CD4-positive, alpha-beta T cell (primary cell): ENCODE measurements at regions of chr5 and their contacts with region 1.

Region 1: GRCh38 chr5:122845229-122846050 is at the start of gene SNX24:
- DNase-seq: peak; percentile 45 to 88 (median 62)
- ATAC-seq: peak; percentile 87
- H3K4me3 ChIP-seq: peak within 1 kb of the TSS; percentile 82
- H3K4me3 Mint-ChIP-seq: peak within 1 kb of the TSS; percentile 92
- H3K27ac ChIP-seq: peak within 1 kb of the TSS; percentile 62 to 64
- H3K27ac Mint-ChIP-seq: peak within 1 kb of the TSS; percentile 82
- H3K4me1 ChIP-seq: peaks cover 20% of the 10 kb centered on the region
- H3K4me1 Mint-ChIP-seq: peaks cover 38% of the 10 kb centered on the region
- H3K27me3 ChIP-seq: no peaks in the 10 kb centered on the region
- H3K27me3 Mint-ChIP-seq: peaks cover 3% of the 10 kb centered on the region
- CTCF ChIP-seq: no peak
- total RNA-seq, gene SNX24: 2.3 to 3.0 TPM

Region 2: GRCh38 chr5:121962347-121962670 is 883.1 kb before region 1 on chr5:
- CTCF ChIA-PET with region 1: no interaction called
- POLR2A ChIA-PET with region 1: interaction called, 3 read pairs
- intact Hi-C with region 1: loop called in 1 of 2 experiments (anchors 5 kb)
- DNase-seq: peak in 1 of 14 experiments; percentile 27
- ATAC-seq: peak; percentile 8
- H3K4me3 ChIP-seq: peak overlapping the region; percentile 78
- H3K4me3 Mint-ChIP-seq: peak overlapping the region; percentile 97
- H3K27ac ChIP-seq: peak overlapping the region; percentile 48 to 54
- H3K27ac Mint-ChIP-seq: peak overlapping the region; percentile 91
- H3K4me1 ChIP-seq: peaks cover 13% of the 10 kb centered on the region
- H3K4me1 Mint-ChIP-seq: peaks cover 47% of the 10 kb centered on the region
- H3K27me3 ChIP-seq: peaks cover 0 to 2% of the 10 kb centered on the region in 2 experiments
- H3K27me3 Mint-ChIP-seq: peaks cover 27% of the 10 kb centered on the region
- CTCF ChIP-seq: no peak

Region 3: DNA sequence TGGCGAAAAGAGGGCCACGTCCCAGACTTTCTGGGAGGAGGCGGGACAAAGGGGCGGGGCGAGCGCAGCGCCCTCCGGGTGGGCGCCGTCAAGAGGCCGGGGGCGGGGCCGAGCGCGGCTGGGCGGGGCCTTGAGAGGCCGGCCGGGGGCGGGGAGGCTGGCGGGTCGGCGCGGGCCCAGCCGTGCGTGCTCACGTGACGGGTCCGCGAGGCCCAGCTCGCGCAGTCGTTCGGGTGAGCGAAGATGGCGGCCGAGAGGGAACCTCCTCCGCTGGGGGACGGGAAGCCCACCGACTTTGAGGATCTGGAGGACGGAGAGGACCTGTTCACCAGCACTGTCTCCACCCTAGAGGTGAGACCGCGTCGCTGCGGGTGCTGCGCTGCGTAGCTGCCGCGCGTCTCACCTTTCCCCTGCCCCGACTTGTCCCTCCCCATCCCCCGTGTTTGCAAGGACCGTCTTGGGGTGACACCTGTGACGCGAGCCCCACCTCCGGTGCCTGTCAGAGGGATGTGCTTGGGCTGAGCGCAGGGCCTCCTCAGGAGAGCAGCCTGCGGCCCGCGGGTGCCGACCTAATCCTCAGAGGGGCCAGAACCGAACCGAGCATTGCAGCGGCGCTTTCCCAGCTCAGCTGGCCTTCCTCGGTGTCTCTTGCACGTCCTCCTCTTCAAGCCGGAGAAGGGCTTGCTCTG is 70.4 kb before region 1 on chr5 and contains the start of gene SNX2:
- CTCF ChIA-PET with region 1: no interaction called
- POLR2A ChIA-PET with region 1: interaction called, 31 read pairs
- intact Hi-C with region 1: loop called (anchors 2 to 10 kb)
- DNase-seq: peak; percentile 73 to 94 (median 84)
- ATAC-seq: peak; percentile 84
- H3K4me3 ChIP-seq: peak within 1 kb of the TSS; percentile 93
- H3K4me3 Mint-ChIP-seq: peak within 1 kb of the TSS; percentile 96
- H3K27ac ChIP-seq: peak within 1 kb of the TSS; percentile 78 to 84
- H3K27ac Mint-ChIP-seq: peak within 1 kb of the TSS; percentile 95
- H3K4me1 ChIP-seq: peaks cover 7% of the 10 kb centered on the region
- H3K4me1 Mint-ChIP-seq: peaks cover 61% of the 10 kb centered on the region
- H3K27me3 ChIP-seq: no peaks in the 10 kb centered on the region
- H3K27me3 Mint-ChIP-seq: no peaks in the 10 kb centered on the region
- CTCF ChIP-seq: peak; percentile 14
- total RNA-seq, gene SNX2: 46.0 to 46.5 TPM